AG04450 (cell line): ENCODE measurements at regions of chr1 and their contacts with region 1.

Region 1: DNA sequence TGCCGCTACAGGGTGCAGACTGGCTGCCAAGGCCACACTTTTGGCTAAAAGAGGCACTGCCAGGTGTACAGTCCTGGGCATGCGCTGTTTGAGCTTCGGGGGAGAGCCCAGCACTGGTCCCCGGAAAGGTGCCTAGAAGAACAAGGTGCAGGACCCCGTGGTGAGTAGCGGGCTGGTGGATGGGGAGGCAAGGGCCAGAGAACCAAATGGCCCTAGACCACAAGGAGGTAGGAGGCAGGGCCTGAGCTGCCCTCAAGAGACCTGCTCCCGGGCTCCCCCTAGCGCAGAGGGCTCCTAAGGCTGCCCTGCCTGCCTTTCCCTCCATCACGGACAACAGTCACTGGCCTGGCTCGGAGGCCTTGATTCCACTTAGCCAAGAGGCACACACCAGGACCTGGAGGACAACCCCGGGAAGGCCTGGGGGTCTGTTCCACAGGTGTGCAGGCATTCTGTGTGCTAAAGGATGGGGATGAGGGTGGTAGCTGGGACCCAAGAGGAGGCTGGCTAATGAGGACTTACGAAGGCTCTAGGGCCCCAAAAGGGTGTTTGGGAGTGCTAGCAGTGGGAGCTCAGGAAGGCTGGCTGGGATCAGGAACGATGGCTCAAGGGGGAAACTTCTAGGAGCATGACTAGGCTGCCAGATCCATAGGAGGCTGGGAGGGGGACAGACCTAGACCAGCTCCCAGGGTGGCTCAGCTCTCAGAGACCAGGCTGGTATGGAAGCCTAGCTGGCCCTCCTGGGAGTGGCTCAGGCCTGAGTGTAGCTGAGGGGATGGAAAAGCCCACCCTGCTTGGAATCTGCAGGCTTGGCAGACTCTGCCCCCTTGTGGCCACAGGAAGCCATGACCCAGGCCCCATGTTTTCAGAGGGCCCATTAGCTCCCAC is 742 bp downstream of the ARTN start:
- DNase-seq: no peak
- H3K4me3 ChIP-seq: no peak overlapping the region
- H3K27ac ChIP-seq: no peak overlapping the region
- H3K27me3 ChIP-seq: no peaks in the 10 kb centered on the region
- CTCF ChIP-seq: peak; percentile 90

Region 2: DNA sequence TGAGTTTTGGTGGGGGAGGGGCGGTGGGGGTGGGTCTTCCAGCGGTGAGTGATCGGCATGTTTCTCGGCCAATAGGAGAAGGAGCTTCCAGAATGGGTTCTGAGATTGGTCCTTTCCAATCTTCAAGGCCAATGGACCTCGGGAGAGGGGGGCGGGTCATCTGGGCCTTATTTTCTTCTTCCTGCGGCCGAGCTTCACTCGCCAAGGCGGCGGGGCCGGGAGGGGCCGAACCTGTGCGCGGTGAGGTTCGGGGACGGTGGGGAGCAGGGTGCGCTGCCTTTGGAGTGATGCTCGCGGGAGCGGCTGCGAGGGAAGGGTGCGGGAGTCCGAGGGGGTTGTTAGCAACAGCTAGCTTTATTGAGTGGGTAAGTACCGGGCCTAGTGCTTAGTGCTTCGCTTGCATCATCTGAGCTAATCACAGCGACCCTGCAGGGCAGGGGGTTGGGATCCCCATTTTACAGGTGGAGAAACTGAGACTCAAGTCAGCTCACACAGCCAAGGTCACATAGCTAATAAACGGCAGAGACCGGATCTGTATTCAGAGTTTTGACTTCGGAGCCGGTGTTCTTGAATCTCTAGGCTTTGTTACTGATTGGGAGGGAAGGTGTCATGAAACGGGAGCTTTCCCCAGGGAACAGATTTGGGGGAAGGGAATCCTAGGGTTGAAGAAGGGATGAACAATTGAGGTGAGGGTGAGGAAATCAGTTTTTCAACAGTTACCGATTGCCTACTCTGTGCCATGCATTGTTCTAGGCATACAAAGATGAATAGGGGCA is 283.8 kb before region 1 on chr1:
- CTCF ChIA-PET with region 1: interaction called, 15 read pairs
- POLR2A ChIA-PET with region 1: interaction called, 3 read pairs
- DNase-seq: peak; percentile 95
- H3K4me3 ChIP-seq: peak overlapping the region; percentile 96
- H3K27ac ChIP-seq: peak overlapping the region; percentile 86
- H3K27me3 ChIP-seq: no peaks in the 10 kb centered on the region
- CTCF ChIP-seq: no peak

Region 3: GRCh38 chr1:43750083-43750482 is 184.3 kb before region 1 on chr1:
- CTCF ChIA-PET with region 1: interaction called, 11 read pairs
- POLR2A ChIA-PET with region 1: no interaction called
- DNase-seq: no peak
- H3K4me3 ChIP-seq: no peak overlapping the region
- H3K27ac ChIP-seq: no peak overlapping the region
- H3K27me3 ChIP-seq: no peaks in the 10 kb centered on the region
- CTCF ChIP-seq: no peak

Region 4: DNA sequence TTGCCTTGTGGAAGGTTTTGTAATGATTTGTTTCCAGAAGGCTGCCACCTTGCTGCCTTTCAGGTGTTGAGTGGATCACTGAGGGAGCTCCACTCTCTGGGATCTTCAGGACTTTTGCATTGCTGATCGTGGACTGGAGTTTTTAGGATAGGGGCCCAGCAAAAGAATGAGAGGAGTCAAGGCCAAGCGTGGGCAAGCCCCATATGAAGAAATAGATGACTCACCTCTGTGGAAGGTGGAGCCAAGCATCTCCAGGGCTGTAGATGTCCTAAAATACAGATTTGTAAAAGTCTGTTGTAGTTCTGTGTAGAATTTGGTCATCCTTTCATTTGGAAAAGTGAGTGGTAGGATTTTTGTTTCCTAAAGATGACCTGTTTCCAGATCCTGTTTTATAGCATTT is 160.0 kb before region 1 on chr1:
- CTCF ChIA-PET with region 1: interaction called, 26 read pairs
- POLR2A ChIA-PET with region 1: no interaction called
- DNase-seq: peak; percentile 36
- H3K4me3 ChIP-seq: no peak overlapping the region
- H3K27ac ChIP-seq: peak overlapping the region; percentile 62
- H3K27me3 ChIP-seq: no peaks in the 10 kb centered on the region
- CTCF ChIP-seq: no peak

Region 5: GRCh38 chr1:43912607-43913006 is 21.7 kb before region 1 on chr1:
- CTCF ChIA-PET with region 1: interaction called, 29 read pairs
- POLR2A ChIA-PET with region 1: interaction called, 3 read pairs
- DNase-seq: peak; percentile 54
- H3K4me3 ChIP-seq: no peak overlapping the region
- H3K27ac ChIP-seq: peak overlapping the region; percentile 52
- H3K27me3 ChIP-seq: no peaks in the 10 kb centered on the region
- CTCF ChIP-seq: no peak

Region 6: DNA sequence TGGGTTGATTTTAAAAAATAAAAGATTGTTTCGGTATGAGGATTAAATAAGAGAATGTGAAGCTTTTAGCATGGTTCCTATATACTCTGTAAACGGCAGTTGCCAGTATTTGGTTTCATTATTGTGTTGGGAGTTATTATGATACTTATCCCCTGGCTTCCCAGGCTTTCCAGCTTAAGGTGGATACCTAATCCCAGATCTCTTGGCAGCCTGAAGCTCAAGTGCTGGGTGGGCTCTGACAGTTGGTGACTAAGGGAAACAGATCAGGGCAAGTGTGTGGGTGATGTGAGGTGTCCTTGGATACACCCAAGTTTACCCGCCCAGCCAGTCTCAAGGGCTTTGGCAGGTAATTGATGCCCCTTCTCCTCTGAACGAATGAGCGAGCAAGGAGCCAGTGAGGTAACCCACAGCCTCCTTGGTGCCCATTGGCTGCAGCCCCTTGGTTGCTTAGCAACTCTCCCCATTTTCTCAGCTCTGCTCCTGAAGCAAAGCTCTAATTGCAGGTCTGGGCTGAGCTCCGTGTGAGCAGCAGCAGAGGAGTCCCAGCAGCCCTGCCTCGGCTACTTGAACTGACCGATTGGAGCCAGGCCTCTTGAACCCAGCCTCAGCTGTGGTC is 18.5 kb after region 1 on chr1:
- CTCF ChIA-PET with region 1: interaction called, 80 read pairs
- POLR2A ChIA-PET with region 1: no interaction called
- DNase-seq: no peak
- H3K4me3 ChIP-seq: no peak overlapping the region
- H3K27ac ChIP-seq: no peak overlapping the region
- H3K27me3 ChIP-seq: no peaks in the 10 kb centered on the region
- CTCF ChIP-seq: no peak

Region 7: GRCh38 chr1:44049839-44050238 is 115.5 kb after region 1 on chr1:
- CTCF ChIA-PET with region 1: interaction called, 10 read pairs
- POLR2A ChIA-PET with region 1: no interaction called
- DNase-seq: peak; percentile 82
- H3K4me3 ChIP-seq: no peak overlapping the region
- H3K27ac ChIP-seq: peak overlapping the region; percentile 79
- H3K27me3 ChIP-seq: no peaks in the 10 kb centered on the region
- CTCF ChIP-seq: no peak